PC-3 (cell line): ENCODE measurements at regions of chr3 and their contacts with region 1.

Region 1: GRCh38 chr3:56758539-56758981 is 43.2 kb downstream of the ARHGEF3 start:
- DNase-seq: peak; percentile 84
- ATAC-seq: peak; percentile 98
- H3K4me3 ChIP-seq: no peak overlapping the region
- H3K27ac ChIP-seq: peak overlapping the region; percentile 18
- H3K4me1 ChIP-seq: peaks cover 10% of the 10 kb centered on the region
- H3K27me3 ChIP-seq: no peaks in the 10 kb centered on the region
- CTCF ChIP-seq: no peak

Region 2: GRCh38 chr3:56783644-56784447 is 25.3 kb after region 1 on chr3:
- CTCF ChIA-PET with region 1: no interaction called
- POLR2A ChIA-PET with region 1: interaction called, 4 read pairs
- intact Hi-C with region 1: loop called (anchors 1 kb)
- DNase-seq: peak; percentile 97
- ATAC-seq: peak; percentile 95
- H3K4me3 ChIP-seq: no peak overlapping the region
- H3K27ac ChIP-seq: peak overlapping the region; percentile 35
- H3K4me1 ChIP-seq: peaks cover 23% of the 10 kb centered on the region
- H3K27me3 ChIP-seq: no peaks in the 10 kb centered on the region
- CTCF ChIP-seq: no peak